Esophagus muscularis mucosa (tissue), 4 donors: ENCODE measurements at regions of chr19 and their contacts with region 1.

Region 1: GRCh38 chr19:3984908-3985642 is at the start of gene EEF2:
- DNase-seq: peak; percentile 97
- H3K4me3 ChIP-seq: peak within 1 kb of the TSS; percentile 71 to 99 (median 84)
- H3K27ac ChIP-seq: peak within 1 kb of the TSS; percentile 93 to 98 (median 95)
- H3K4me1 ChIP-seq: peaks cover 48 to 76% (median 65%) of the 10 kb centered on the region in 4 donors
- H3K27me3 ChIP-seq: no peaks in the 10 kb centered on the region
- CTCF ChIP-seq: peak in 1 of 3 experiments; percentile 27
- EP300 ChIP-seq: no peak
- POLR2A ChIP-seq: peak; percentile 99
- total RNA-seq, gene EEF2: 2,280 to 3,286 (median 2,635) TPM

Region 2: GRCh38 chr19:3931041-3931440 is 54.0 kb before region 1 on chr19:
- intact Hi-C with region 1: no loop called
- DNase-seq: no peak
- H3K4me3 ChIP-seq: no peak overlapping the region
- H3K27ac ChIP-seq: no peak overlapping the region
- H3K4me1 ChIP-seq: peaks cover 10 to 22% (median 15%) of the 10 kb centered on the region in 4 donors
- H3K27me3 ChIP-seq: peaks cover 0 to 24% (median 3%) of the 10 kb centered on the region in 4 donors
- CTCF ChIP-seq: no peak
- EP300 ChIP-seq: no peak
- POLR2A ChIP-seq: no peak

Region 3: DNA sequence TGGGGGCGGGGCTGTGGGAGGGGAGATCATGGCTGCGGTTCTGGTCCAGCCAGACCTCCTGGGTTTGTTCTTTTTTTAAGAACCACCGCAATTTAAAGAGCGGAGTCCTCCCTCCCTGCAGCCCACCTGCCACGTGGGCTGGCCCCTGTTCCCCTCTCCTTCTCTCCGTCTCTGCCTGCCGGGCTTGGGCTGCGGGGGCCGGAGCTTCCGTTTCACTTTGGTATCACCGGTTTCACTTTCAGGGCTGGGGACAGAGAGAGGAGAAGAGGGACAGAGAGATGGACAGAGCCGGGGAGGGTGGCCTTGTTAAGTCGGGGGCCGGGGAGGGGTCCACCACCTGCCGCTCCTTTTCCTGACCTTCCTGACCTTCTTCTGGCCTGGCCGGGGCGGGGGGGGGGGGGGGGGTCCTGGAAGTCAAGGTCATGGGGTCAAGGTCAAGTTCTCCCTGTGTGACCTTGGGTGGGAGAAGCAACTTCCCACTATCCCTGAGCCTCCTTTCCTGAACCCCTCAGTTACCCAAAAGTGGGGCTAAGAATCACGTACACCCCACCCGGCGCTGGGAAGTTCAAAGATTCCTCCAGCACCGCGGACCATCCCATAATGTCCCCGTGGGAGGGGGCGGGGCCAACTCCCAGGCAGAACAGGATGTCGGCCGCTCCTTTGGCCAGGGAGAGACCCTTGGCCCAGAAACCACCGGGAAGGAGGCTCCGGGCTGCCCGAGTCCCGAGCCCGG is 93.0 kb after region 1 on chr19:
- intact Hi-C with region 1: loop called (anchors 5 kb)
- DNase-seq: no peak
- H3K4me3 ChIP-seq: peak overlapping the region; percentile 62 to 67 (median 66)
- H3K27ac ChIP-seq: peak overlapping the region; percentile 77 to 85 (median 82)
- H3K4me1 ChIP-seq: peaks cover 17 to 25% (median 18%) of the 10 kb centered on the region in 4 donors
- H3K27me3 ChIP-seq: no peaks in the 10 kb centered on the region
- CTCF ChIP-seq: no peak
- EP300 ChIP-seq: no peak
- POLR2A ChIP-seq: no peak

Region 4: GRCh38 chr19:4139614-4140236 is 154.7 kb after region 1 on chr19:
- intact Hi-C with region 1: loop called (anchors 10 kb)
- DNase-seq: no peak
- H3K4me3 ChIP-seq: no peak overlapping the region
- H3K27ac ChIP-seq: no peak overlapping the region
- H3K4me1 ChIP-seq: peaks cover 0 to 14% (median 10%) of the 10 kb centered on the region in 4 donors
- H3K27me3 ChIP-seq: peaks cover 0 to 16% (median 0%) of the 10 kb centered on the region in 4 donors
- CTCF ChIP-seq: peak; percentile 57 to 84 (median 61)
- EP300 ChIP-seq: no peak
- POLR2A ChIP-seq: no peak

Region 5: DNA sequence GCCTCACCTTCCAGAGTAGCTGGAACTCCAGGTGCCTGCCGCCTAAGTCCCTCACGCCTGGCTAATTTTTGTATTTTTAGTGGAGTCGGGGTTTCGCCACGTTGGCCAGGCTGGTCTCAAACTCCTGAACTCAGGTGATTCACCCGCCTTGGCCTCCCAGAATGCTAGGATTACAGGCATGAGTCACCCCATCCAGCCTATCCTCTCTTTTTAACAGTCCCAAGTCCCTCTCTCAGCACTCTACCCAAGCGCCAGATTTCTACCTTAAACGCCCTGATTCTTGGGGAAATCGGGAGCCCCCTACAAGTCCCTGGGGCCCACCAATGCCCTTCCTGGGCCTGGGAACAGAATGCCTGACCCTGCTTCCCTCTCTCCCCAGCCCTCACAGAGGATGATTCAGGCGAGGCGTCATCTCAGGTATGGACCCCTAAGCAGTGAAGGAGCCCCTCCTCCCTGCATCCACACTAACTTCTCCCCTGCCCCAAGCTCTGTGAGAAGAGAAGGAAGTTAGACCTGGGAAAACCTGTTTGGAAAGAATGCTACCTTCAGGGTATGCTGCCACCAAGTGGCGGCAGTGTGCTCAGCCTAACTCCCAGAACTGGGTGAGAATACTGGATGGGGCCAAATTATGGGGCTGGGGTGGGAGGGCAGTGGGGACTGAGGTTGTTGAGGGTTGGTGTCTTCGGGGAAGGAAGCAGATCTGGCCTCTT is 223.5 kb after region 1 on chr19:
- intact Hi-C with region 1: loop called (anchors 2 kb)
- DNase-seq: no peak
- H3K4me3 ChIP-seq: no peak overlapping the region
- H3K27ac ChIP-seq: no peak overlapping the region
- H3K4me1 ChIP-seq: peaks cover 0 to 8% (median 7%) of the 10 kb centered on the region in 4 donors
- H3K27me3 ChIP-seq: peaks cover 0 to 57% (median 0%) of the 10 kb centered on the region in 4 donors
- CTCF ChIP-seq: no peak
- EP300 ChIP-seq: no peak
- POLR2A ChIP-seq: no peak

Region 6: DNA sequence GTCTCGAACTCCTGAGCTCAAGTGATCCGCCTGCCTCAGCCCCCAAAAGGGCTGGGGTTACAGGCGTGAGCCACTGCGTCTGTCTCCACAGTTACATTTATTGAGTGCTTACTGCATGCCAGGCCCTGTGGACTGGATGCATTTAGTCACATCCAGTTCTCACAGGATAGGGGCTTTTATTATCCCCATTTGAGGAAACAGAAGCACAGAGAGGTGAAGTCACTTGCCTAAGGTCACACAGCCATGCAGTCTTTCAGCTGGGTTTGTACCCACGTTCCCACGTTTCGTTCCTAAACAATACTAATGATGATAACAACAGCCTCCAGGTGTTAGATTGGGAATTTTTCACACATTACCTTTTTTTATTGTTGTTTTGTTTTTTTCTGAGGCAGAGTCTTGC is 235.1 kb after region 1 on chr19:
- intact Hi-C with region 1: no loop called
- DNase-seq: no peak
- H3K4me3 ChIP-seq: no peak overlapping the region
- H3K27ac ChIP-seq: no peak overlapping the region
- H3K4me1 ChIP-seq: no peaks in the 10 kb centered on the region
- H3K27me3 ChIP-seq: no peaks in the 10 kb centered on the region
- CTCF ChIP-seq: no peak
- EP300 ChIP-seq: no peak
- POLR2A ChIP-seq: no peak